Activated CD4-positive, alpha-beta T cell treated with anti-CD3 and anti-CD28 coated beads for 36 hours (primary cell): ENCODE measurements at regions of chr5 and their contacts with region 1.

Region 1: DNA sequence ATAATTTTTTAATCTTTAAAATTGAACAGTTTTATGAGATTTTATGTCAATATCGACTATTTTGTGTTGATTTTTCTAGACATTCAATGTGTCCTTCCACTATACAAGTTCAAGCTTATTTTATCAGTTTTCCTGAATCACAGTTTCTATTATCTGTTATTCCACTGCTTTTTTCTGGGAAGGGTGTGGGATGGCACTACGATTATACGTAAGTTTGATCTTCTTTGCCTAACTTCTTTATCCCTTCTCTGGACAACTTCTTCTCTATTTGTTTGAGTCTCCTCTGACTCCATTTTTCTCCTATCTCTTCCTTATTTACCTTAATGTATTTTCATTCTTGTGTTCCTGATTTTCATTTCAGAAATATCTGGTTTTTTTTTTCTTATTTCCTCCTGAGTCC is 24.5 kb downstream of the TBC1D9B start:
- DNase-seq: no peak
- ATAC-seq: no peak
- H3K4me3 Mint-ChIP-seq: no peak overlapping the region
- H3K27ac Mint-ChIP-seq: no peak overlapping the region
- H3K4me1 Mint-ChIP-seq: no peaks in the 10 kb centered on the region
- H3K27me3 Mint-ChIP-seq: no peaks in the 10 kb centered on the region

Region 2: DNA sequence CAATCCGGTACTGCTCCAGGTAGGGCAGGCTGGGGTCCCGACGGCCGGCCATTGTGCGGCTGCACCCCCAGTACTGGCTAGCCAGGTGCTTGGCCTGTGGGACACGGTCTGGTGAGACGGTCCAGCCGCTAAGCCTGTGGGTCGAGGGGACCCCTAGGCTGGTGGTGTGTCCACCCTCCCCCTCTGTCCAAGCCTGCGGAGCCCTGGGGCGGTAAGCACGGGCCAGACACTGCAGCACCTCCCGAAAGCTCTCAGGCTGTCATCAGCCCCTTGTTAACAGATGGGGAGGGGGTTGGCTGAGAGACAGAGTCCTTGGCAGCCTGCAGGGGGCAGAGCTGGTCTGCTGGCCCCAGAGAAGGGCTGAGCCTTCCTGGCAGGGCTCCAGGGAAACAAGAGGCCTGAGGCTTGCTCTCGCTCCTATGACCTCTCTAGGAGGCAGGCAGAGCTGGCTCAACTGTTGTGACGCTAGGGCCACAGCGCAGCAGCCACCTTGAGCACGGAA is 12.7 kb before region 1 on chr5:
- CTCF ChIA-PET with region 1: no interaction called
- POLR2A ChIA-PET with region 1: no interaction called
- intact Hi-C with region 1: no loop called
- DNase-seq: peak; percentile 28
- ATAC-seq: no peak
- H3K4me3 Mint-ChIP-seq: no peak overlapping the region
- H3K27ac Mint-ChIP-seq: no peak overlapping the region
- H3K4me1 Mint-ChIP-seq: peaks cover 2% of the 10 kb centered on the region
- H3K27me3 Mint-ChIP-seq: no peaks in the 10 kb centered on the region

Region 3: GRCh38 chr5:179914032-179914755 is 31.0 kb after region 1 on chr5:
- CTCF ChIA-PET with region 1: no interaction called
- POLR2A ChIA-PET with region 1: no interaction called
- intact Hi-C with region 1: no loop called
- DNase-seq: no peak
- ATAC-seq: peak; percentile 88
- H3K4me3 Mint-ChIP-seq: no peak overlapping the region
- H3K27ac Mint-ChIP-seq: no peak overlapping the region
- H3K4me1 Mint-ChIP-seq: no peaks in the 10 kb centered on the region
- H3K27me3 Mint-ChIP-seq: peaks cover 2% of the 10 kb centered on the region

Region 4: DNA sequence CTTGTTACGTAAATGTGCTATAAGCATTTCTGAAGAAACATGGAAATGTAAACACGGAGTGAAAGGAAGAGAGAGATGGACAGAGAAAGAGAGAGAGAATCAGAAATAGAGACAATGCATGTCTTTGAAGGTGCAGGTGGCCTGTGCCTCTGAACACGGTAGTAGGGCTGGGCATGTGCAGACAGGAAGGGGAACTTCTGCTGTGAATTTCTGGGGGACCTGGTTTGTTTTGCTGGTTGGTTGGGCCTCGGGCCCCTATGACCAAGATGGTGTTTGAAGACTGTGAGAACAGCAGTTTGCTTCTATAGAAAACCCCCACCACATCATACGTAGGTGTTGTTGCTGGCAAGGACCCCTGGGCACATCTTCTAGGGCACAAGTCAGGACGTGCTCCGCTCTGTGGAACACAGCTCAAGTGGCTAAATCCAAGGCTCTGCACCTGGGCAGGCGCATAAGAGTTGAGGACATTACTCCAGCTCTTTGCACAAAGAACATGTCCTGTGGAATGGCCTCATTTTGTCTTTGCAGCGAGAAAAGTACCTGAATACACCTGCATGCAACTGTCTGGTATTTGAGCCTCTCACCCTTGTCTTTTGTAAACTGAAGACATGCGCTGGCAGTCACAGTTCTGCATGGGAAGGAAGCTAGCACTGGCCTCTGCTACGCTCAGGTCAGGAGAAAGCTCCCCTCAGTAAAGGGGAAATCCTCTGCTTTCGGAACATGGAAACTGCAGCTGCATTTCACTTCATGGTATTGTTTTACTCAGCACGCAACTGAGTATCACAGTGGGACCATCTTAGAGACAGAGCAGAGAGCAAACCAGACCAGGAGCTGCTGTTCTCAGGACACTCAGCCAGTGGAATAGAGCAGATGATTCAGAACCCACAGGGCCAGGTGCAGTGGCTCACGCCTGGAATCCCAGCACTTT is 1266.9 kb after region 1 on chr5:
- CTCF ChIA-PET with region 1: no interaction called
- POLR2A ChIA-PET with region 1: interaction called, 12 read pairs
- intact Hi-C with region 1: no loop called
- DNase-seq: no peak
- ATAC-seq: no peak
- H3K4me3 Mint-ChIP-seq: no peak overlapping the region
- H3K27ac Mint-ChIP-seq: no peak overlapping the region
- H3K4me1 Mint-ChIP-seq: peaks cover 13% of the 10 kb centered on the region
- H3K27me3 Mint-ChIP-seq: peaks cover 22% of the 10 kb centered on the region